GM12878 (cell line): ENCODE measurements at regions of chr15 and their contacts with region 1.

Region 1: GRCh38 chr15:71448688-71449114 is 333.4 kb downstream of the THSD4 start:
- DNase-seq: no peak
- ATAC-seq: peak; percentile 51; the same call in 1 of the 3 replicates
- H3K4me3 ChIP-seq: no peak overlapping the region
- H3K27ac ChIP-seq: no peak overlapping the region
- H3K4me1 ChIP-seq: no peaks in the 10 kb centered on the region
- H3K27me3 ChIP-seq: no peaks in the 10 kb centered on the region; a peak in 1 of 4 replicates
- CTCF ChIP-seq: peak; percentile 74 to 93 (median 80)
- EP300 ChIP-seq: no peak
- POLR2A ChIP-seq: no peak
- RAD21 ChIP-seq: peak; percentile 90

Region 2: GRCh38 chr15:70974004-70974832 is 474.5 kb before region 1 on chr15:
- CTCF ChIA-PET with region 1: interaction called, 6 read pairs
- POLR2A ChIA-PET with region 1: no interaction called
- RAD21 ChIA-PET with region 1: no interaction called
- SMC1A ChIA-PET with region 1: interaction called, 4 read pairs
- in situ Hi-C with region 1: loop called (anchors 25 kb)
- intact Hi-C with region 1: loop called (anchors 5 kb)
- DNase-seq: no peak
- ATAC-seq: no peak
- H3K4me3 ChIP-seq: no peak overlapping the region
- H3K27ac ChIP-seq: no peak overlapping the region
- H3K4me1 ChIP-seq: no peaks in the 10 kb centered on the region
- H3K27me3 ChIP-seq: no peaks in the 10 kb centered on the region
- CTCF ChIP-seq: peak in 1 of 3 experiments; percentile 19; a peak in 1 of 6 replicates
- EP300 ChIP-seq: no peak
- POLR2A ChIP-seq: no peak
- RAD21 ChIP-seq: 0 out of 2 replicates have a peak, but pooled peaks have one; percentile 37

Region 3: GRCh38 chr15:71114896-71115554 is 333.7 kb before region 1 on chr15 and contains the start of gene THSD4:
- CTCF ChIA-PET with region 1: no interaction called
- POLR2A ChIA-PET with region 1: no interaction called
- RAD21 ChIA-PET with region 1: no interaction called
- SMC1A ChIA-PET with region 1: no interaction called
- in situ Hi-C with region 1: loop called (anchors 25 kb)
- intact Hi-C with region 1: loop called (anchors 5 kb)
- DNase-seq: no peak
- ATAC-seq: peak; percentile 94
- H3K4me3 ChIP-seq: peak within 1 kb of the TSS; percentile 28; the same call in 1 of the 2 replicates
- H3K27ac ChIP-seq: no peak within 1 kb of the TSS
- H3K4me1 ChIP-seq: no peaks in the 10 kb centered on the region
- H3K27me3 ChIP-seq: peaks cover 2 to 5% of the 10 kb centered on the region in 2 experiments; a peak in 1 of 4 replicates
- CTCF ChIP-seq: peak; percentile 63 to 94 (median 84)
- EP300 ChIP-seq: no peak
- POLR2A ChIP-seq: no peak
- RAD21 ChIP-seq: peak; percentile 58
- polyA plus RNA-seq, gene THSD4: not detected

Region 4: GRCh38 chr15:71651750-71652186 is 203.1 kb after region 1 on chr15:
- CTCF ChIA-PET with region 1: interaction called, 6 read pairs
- POLR2A ChIA-PET with region 1: no interaction called
- RAD21 ChIA-PET with region 1: no interaction called
- SMC1A ChIA-PET with region 1: no interaction called
- in situ Hi-C with region 1: no loop called
- intact Hi-C with region 1: loop called (anchors 1 kb)
- DNase-seq: peak; percentile 12
- ATAC-seq: peak; percentile 55; the same call in 2 of the 3 replicates
- H3K4me3 ChIP-seq: no peak overlapping the region
- H3K27ac ChIP-seq: no peak overlapping the region
- H3K4me1 ChIP-seq: no peaks in the 10 kb centered on the region
- H3K27me3 ChIP-seq: no peaks in the 10 kb centered on the region; a peak in 1 of 4 replicates
- CTCF ChIP-seq: peak; percentile 37 to 60 (median 39); a peak in 5 of 6 replicates
- EP300 ChIP-seq: no peak
- POLR2A ChIP-seq: no peak
- RAD21 ChIP-seq: peak; percentile 68

Region 5: DNA sequence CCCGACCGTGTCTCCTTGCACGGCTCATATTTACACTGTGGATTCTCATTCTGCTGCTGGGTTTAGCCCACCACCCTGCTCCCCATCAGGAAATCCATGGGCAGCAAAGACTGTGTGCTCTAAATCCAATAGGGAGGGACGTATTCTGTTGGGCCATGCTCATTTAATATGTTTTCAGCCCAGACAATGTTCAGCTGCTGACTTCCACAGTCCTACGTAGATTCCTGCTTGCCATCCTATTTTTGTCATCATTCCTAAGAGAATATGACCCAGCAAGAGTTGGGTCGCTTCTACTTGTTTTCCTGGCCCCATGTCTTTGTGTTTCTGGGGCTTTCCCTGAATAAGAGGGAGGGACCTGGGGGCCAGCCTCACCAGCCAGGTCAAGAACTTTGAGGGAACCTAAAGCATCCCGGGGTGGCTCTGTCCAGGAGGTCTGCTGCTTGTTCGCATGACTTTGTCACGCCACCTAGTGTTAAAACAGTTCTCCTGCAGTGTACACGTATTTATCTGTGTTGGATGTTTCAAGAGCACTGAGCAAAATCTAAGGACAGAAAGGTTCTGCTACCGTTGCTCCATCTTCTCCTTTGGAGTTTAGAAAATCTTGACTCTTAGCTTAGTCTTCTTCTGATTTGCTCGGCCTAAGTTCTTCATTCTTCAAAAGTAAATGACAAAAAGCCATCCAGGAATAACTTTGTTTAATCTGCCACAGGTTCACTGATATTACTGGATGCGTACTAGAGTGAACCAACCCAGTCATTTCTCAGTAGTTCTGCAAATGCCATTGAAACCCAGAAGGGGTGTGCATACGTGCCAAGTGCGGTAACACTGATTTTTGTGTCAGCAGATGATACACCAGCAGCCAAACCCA is 281.8 kb after region 1 on chr15:
- CTCF ChIA-PET with region 1: interaction called, 4 read pairs
- POLR2A ChIA-PET with region 1: no interaction called
- RAD21 ChIA-PET with region 1: no interaction called
- SMC1A ChIA-PET with region 1: interaction called, 3 read pairs
- in situ Hi-C with region 1: no loop called
- intact Hi-C with region 1: loop called (anchors 1 kb)
- DNase-seq: no peak
- ATAC-seq: peak; percentile 94
- H3K4me3 ChIP-seq: no peak overlapping the region
- H3K27ac ChIP-seq: no peak overlapping the region
- H3K4me1 ChIP-seq: no peaks in the 10 kb centered on the region
- H3K27me3 ChIP-seq: 0 out of 4 replicates have a peak, but pooled peaks cover 0 to 2% of the 10 kb centered on the region in 2 experiments
- CTCF ChIP-seq: peak; percentile 68 to 76 (median 75)
- EP300 ChIP-seq: no peak
- POLR2A ChIP-seq: no peak
- RAD21 ChIP-seq: peak; percentile 75

Region 6: GRCh38 chr15:71800835-71801745 is 352.4 kb after region 1 on chr15:
- CTCF ChIA-PET with region 1: no interaction called
- POLR2A ChIA-PET with region 1: no interaction called
- RAD21 ChIA-PET with region 1: interaction called, 3 read pairs
- SMC1A ChIA-PET with region 1: interaction called, 3 read pairs
- in situ Hi-C with region 1: loop called (anchors 10 kb)
- intact Hi-C with region 1: loop called (anchors 2 kb)
- DNase-seq: no peak
- ATAC-seq: peak; percentile 78
- H3K4me3 ChIP-seq: no peak overlapping the region
- H3K27ac ChIP-seq: no peak overlapping the region
- H3K4me1 ChIP-seq: peaks cover 10% of the 10 kb centered on the region
- H3K27me3 ChIP-seq: no peaks in the 10 kb centered on the region
- CTCF ChIP-seq: peak; percentile 65 to 86 (median 72); a peak in 5 of 6 replicates
- EP300 ChIP-seq: no peak
- POLR2A ChIP-seq: no peak
- RAD21 ChIP-seq: peak; percentile 96